PC-9 (cell line): ENCODE measurements at regions of chr19 and their contacts with region 1.

Region 1: GRCh38 chr19:40777937-40778705 is at the start of gene RAB4B:
- DNase-seq: peak; percentile 97 to 100
- H3K4me3 ChIP-seq: peak within 1 kb of the TSS; percentile 64
- H3K27ac ChIP-seq: peak within 1 kb of the TSS; percentile 95
- H3K4me1 ChIP-seq: peaks cover 13% of the 10 kb centered on the region
- H3K27me3 ChIP-seq: no peaks in the 10 kb centered on the region
- CTCF ChIP-seq: no peak
- total RNA-seq, gene RAB4B: 22.2 and 24.8 TPM in 2 replicates

Region 2: DNA sequence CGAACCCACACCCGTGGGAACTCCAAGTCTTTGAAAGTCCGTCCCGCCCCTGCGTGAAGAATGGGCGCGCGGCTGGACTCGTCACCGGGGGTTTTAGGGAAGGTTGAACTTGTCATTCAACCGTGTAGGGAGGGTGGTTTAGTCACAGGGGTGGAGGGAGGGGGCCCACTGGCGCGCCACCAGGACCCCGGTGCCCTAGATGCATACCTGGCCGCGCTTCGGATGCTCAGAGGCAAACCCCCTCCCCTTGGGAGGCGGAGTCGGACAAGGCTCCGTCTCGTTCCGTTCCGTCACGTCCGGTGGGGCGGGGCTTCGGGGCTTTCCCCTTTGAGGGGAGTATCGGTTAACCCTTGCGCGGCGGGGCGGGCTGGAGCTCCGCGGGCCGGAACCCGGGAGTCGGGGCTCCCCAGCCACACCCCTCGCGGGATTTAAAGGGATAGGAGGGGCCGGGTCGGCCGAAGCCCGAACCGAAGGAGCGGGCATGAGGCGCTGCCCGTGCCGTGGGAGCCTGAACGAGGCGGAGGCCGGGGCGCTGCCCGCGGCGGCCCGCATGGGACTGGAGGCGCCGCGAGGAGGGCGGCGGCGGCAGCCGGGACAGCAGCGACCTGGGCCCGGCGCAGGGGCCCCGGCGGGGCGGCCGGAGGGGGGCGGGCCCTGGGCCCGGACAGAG is 61.3 kb before region 1 on chr19 and contains the starts of genes COQ8B and ITPKC:
- CTCF ChIA-PET with region 1: no interaction called
- POLR2A ChIA-PET with region 1: interaction called, 35 read pairs
- intact Hi-C with region 1: loop called (anchors 1 kb)
- DNase-seq: peak; percentile 94 to 99
- H3K4me3 ChIP-seq: peak within 1 kb of the TSS; percentile 75
- H3K27ac ChIP-seq: peak within 1 kb of the TSS; percentile 99
- H3K4me1 ChIP-seq: peaks cover 27% of the 10 kb centered on the region
- H3K27me3 ChIP-seq: no peaks in the 10 kb centered on the region
- CTCF ChIP-seq: no peak
- total RNA-seq, gene COQ8B: 57.7 and 66.6 TPM in 2 replicates
- total RNA-seq, gene ITPKC: 17.6 and 22.1 TPM in 2 replicates

Region 3: GRCh38 chr19:40798223-40798996 is 20.3 kb after region 1 on chr19:
- CTCF ChIA-PET with region 1: interaction called, 11 read pairs
- POLR2A ChIA-PET with region 1: interaction called, 9 read pairs
- intact Hi-C with region 1: loop called (anchors 1 kb)
- DNase-seq: peak; percentile 95 to 100
- H3K4me3 ChIP-seq: peak overlapping the region; percentile 52
- H3K27ac ChIP-seq: peak overlapping the region; percentile 11; the same call in 1 of the 2 replicates
- H3K4me1 ChIP-seq: peaks cover 28% of the 10 kb centered on the region
- H3K27me3 ChIP-seq: no peaks in the 10 kb centered on the region
- CTCF ChIP-seq: peak; percentile 60; the same call in 1 of the 2 replicates

Region 4: GRCh38 chr19:40822161-40822560 is 44.0 kb after region 1 on chr19:
- CTCF ChIA-PET with region 1: interaction called, 4 read pairs
- POLR2A ChIA-PET with region 1: interaction called, 12 read pairs
- intact Hi-C with region 1: no loop called
- DNase-seq: no peak
- H3K4me3 ChIP-seq: no peak overlapping the region
- H3K27ac ChIP-seq: no peak overlapping the region
- H3K4me1 ChIP-seq: 0 out of 2 replicates have a peak, but pooled peaks cover 5% of the 10 kb centered on the region
- H3K27me3 ChIP-seq: no peaks in the 10 kb centered on the region
- CTCF ChIP-seq: no peak